ENCODE measurements at regions of chr14 and their contacts with region 1.

Region 1: GRCh38 chr14:45253068-45253753 is at the start of gene MIS18BP1:
- DNase-seq: peak; percentile 82 to 96 (median 92)
- ATAC-seq: peak; percentile 88 to 92
- H3K4me3 Mint-ChIP-seq: peak within 1 kb of the TSS; percentile 90 to 97 (median 96)
- H3K27ac Mint-ChIP-seq: peak within 1 kb of the TSS; percentile 89 to 98 (median 98)
- H3K4me1 Mint-ChIP-seq: peaks cover 8 to 37% (median 20%) of the 10 kb centered on the region in 4 donors
- H3K27me3 Mint-ChIP-seq: no peaks in the 10 kb centered on the region
- polyA plus RNA-seq, gene MIS18BP1: 16.2 to 18.4 (median 18.0) TPM

Region 2: GRCh38 chr14:45134051-45134958 is 118.9 kb before region 1 on chr14 and contains the start of gene FKBP3:
- POLR2A ChIA-PET with region 1: interaction called, 10 read pairs
- DNase-seq: peak; percentile 83 to 99 (median 95)
- ATAC-seq: peak; percentile 90 to 93
- H3K4me3 Mint-ChIP-seq: peak within 1 kb of the TSS; percentile 94 to 100 (median 96)
- H3K27ac Mint-ChIP-seq: peak within 1 kb of the TSS; percentile 94 to 99 (median 98)
- H3K4me1 Mint-ChIP-seq: peaks cover 23 to 63% (median 45%) of the 10 kb centered on the region in 4 donors
- H3K27me3 Mint-ChIP-seq: no peaks in the 10 kb centered on the region
- polyA plus RNA-seq, gene FKBP3: 60.9 to 83.2 (median 81.6) TPM